Naive thymus-derived CD4-positive, alpha-beta T cell (primary cell): ENCODE measurements at regions of chr17 and their contacts with region 1.

Region 1: DNA sequence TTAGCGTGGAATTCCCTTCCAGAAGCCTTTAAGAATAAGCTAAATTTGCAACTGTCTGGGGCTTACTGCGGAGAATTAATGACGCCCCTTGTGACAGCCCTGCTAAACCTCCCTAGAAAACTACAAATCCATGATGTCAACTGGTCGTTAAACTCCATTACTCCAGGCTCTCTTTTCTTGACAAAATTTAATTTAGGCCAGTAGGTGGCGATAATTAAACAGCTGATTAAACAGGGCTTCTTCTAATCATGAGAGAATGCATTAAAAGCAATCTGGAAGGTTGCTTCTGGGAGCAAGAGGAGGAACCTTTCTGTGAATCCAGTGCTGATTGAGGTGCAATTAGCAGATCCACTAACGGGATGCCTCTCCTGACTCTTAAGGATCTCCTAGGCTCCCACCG is 8.1 kb upstream of the NLRP1 start:
- DNase-seq: peak in 5 of 9 donors; percentile 36 to 54 (median 46)
- ATAC-seq: peak; percentile 45
- H3K4me3 ChIP-seq: no peak overlapping the region
- H3K4me3 Mint-ChIP-seq: no peak overlapping the region
- H3K27ac ChIP-seq: no peak overlapping the region
- H3K27ac Mint-ChIP-seq: no peak overlapping the region
- H3K4me1 ChIP-seq: peaks cover 0 to under 1% of the 10 kb centered on the region in 2 donors
- H3K4me1 Mint-ChIP-seq: peaks cover under 1 to 7% (median 3%) of the 10 kb centered on the region in 7 donors
- H3K27me3 ChIP-seq: no peaks in the 10 kb centered on the region
- H3K27me3 Mint-ChIP-seq: peaks cover 13 to 44% (median 19%) of the 10 kb centered on the region in 5 donors

Region 2: GRCh38 chr17:6421700-6422604 is 829.6 kb after region 1 on chr17:
- CTCF ChIA-PET with region 1: interaction called, 11 read pairs
- POLR2A ChIA-PET with region 1: no interaction called
- intact Hi-C with region 1: loop called (anchors 1 kb)
- DNase-seq: peak; percentile 28 to 74 (median 56)
- ATAC-seq: peak; percentile 89
- H3K4me3 ChIP-seq: no peak overlapping the region
- H3K4me3 Mint-ChIP-seq: no peak overlapping the region
- H3K27ac ChIP-seq: no peak overlapping the region
- H3K27ac Mint-ChIP-seq: peak overlapping the region in 1 of 9 donors; percentile 25
- H3K4me1 ChIP-seq: peaks cover 0 to 5% of the 10 kb centered on the region in 2 donors
- H3K4me1 Mint-ChIP-seq: peaks cover 1 to 8% (median 3%) of the 10 kb centered on the region in 7 donors
- H3K27me3 ChIP-seq: no peaks in the 10 kb centered on the region
- H3K27me3 Mint-ChIP-seq: peaks cover 0 to 57% (median 11%) of the 10 kb centered on the region in 5 donors

Region 3: DNA sequence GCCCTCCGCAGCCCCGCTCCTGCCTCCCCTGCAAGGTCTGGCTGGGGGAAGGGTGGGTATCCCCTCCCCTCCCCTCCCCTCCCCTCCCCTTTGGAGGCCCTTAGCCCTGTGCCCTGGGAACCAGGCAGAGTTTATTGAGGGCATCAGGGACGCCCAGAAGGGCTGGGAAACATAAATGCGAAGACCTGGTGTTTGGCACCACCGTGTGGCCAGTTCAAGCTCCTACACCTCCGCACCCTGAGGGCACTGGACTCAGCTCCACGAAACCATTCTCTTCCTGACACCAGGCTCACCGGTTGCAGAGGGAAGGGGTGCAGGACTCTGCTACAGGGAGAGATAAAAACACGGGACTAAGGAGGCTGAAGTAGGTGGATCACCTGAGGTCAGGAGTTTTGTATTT is 843.6 kb after region 1 on chr17:
- CTCF ChIA-PET with region 1: interaction called, 13 read pairs
- POLR2A ChIA-PET with region 1: interaction called, 7 read pairs
- intact Hi-C with region 1: loop called (anchors 1 kb)
- DNase-seq: peak; percentile 33 to 61 (median 52)
- ATAC-seq: peak; percentile 98
- H3K4me3 ChIP-seq: no peak overlapping the region
- H3K4me3 Mint-ChIP-seq: no peak overlapping the region
- H3K27ac ChIP-seq: no peak overlapping the region
- H3K27ac Mint-ChIP-seq: peak overlapping the region in 2 of 9 donors; percentile 25 to 67
- H3K4me1 ChIP-seq: no peaks in the 10 kb centered on the region
- H3K4me1 Mint-ChIP-seq: peaks cover 0 to 2% (median 0%) of the 10 kb centered on the region in 7 donors
- H3K27me3 ChIP-seq: no peaks in the 10 kb centered on the region
- H3K27me3 Mint-ChIP-seq: peaks cover 7 to 73% (median 10%) of the 10 kb centered on the region in 5 donors